ENCODE measurements at regions of chr12 and their contacts with region 1.

Region 1: GRCh38 chr12:3896801-3897331 is 23.7 kb upstream of the PARP11 start:
- DNase-seq: no peak
- H3K4me3 ChIP-seq: no peak overlapping the region
- H3K27ac ChIP-seq: no peak overlapping the region
- H3K4me1 ChIP-seq: no peaks in the 10 kb centered on the region
- H3K27me3 ChIP-seq: no peaks in the 10 kb centered on the region
- CTCF ChIP-seq: no peak

Region 2: DNA sequence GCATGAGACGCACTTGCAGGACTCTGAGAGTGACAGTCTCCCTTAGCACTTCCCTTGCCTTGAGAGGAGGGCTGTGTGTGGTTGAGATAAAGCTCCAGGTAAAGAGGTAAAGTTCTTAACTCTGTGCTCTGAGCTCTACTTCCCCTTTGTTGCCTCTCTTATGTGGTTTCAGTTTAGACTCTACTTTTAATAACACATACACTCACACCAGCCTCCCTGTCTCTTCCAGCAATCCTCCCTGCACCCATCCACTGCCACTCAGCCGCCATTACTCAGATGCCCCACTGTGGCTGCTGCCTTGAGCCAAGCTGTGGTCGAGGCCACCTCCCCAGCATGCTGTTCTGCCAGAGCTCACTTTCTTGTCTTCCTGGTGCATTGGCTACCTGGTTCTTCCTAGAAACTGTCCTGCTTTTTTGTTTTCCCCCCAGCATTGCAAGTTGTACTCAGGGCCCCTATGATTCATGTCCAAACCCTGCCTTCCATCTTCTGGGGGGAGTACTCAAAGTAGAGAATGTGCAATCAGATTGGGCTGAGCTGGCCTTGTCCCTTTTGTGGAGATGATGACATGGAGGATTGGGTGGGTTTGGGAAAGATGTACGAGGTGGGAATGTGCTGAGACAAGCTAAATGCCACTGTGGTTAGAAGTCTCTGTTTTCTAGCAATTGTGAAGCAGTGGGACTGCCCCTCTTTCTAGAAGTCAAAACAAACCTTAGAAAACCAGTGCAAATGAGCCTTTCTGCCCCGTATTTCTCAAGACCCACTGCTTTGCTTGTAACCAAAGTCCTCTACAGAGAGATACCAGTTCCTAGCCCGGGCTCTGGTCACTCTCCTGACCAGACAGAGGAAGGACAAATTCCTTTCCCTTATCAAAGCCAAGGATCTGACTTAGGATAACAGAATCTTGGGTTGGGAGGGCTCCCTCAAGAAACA is 91.9 kb after region 1 on chr12:
- intact Hi-C with region 1: loop called (anchors 10 kb)
- DNase-seq: no peak
- H3K4me3 ChIP-seq: no peak overlapping the region
- H3K27ac ChIP-seq: no peak overlapping the region
- H3K4me1 ChIP-seq: no peaks in the 10 kb centered on the region
- H3K27me3 ChIP-seq: no peaks in the 10 kb centered on the region
- CTCF ChIP-seq: no peak

Measured in kidney (tissue), 22 donors.